ENCODE measurements at regions of chr18 and their contacts with region 1.

Region 1: DNA sequence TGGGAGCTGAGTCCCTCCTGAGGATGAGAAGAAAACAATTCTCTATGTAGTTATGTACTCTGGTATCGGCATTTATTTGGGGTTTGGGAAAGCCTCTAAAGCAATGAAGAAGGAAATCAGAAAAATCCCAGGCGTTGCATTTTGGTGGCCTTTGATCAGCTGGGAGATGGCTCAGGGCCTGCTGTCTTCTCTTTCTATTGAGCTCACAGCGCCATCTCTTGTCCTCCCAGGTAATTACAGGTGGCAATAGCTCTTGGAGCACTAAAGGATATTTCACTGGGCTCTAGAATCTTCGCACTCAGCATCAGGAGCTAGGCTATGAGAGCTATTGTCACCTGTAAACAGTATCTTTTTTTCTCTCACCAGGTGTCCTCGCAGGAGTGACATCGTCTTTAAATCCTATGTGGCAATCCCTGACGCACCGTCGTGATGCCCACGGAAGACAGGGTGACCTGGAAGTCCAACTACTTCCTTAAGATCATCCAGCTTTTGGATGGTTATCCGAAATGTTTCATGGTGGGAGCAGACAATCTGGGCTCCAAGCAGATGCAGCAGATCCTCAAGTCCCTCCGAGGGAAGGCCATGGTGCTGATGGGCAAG is 76.1 kb upstream of the PMAIP1 start:
- DNase-seq: peak; percentile 64
- H3K4me3 ChIP-seq: no peak overlapping the region; a peak in 1 of 4 replicates
- H3K27ac ChIP-seq: peak overlapping the region in 1 of 2 experiments; percentile 54; a peak in 2 of 4 replicates
- H3K4me1 ChIP-seq: peaks cover 0 to 12% of the 10 kb centered on the region in 2 experiments; a peak in 1 of 4 replicates
- H3K27me3 ChIP-seq: no peaks in the 10 kb centered on the region
- CTCF ChIP-seq: peak; percentile 94
- EP300 ChIP-seq: no peak
- RAD21 ChIP-seq: peak; percentile 99

Region 2: GRCh38 chr18:59470561-59471121 is 353.1 kb before region 1 on chr18:
- CTCF ChIA-PET with region 1: interaction called, 26 read pairs
- POLR2A ChIA-PET with region 1: no interaction called
- DNase-seq: no peak
- H3K4me3 ChIP-seq: no peak overlapping the region
- H3K27ac ChIP-seq: peak overlapping the region in 1 of 2 experiments; percentile 9; a peak in 1 of 4 replicates
- H3K4me1 ChIP-seq: peaks cover 0 to 12% of the 10 kb centered on the region in 2 experiments; a peak in 1 of 4 replicates
- H3K27me3 ChIP-seq: no peaks in the 10 kb centered on the region
- CTCF ChIP-seq: no peak
- EP300 ChIP-seq: peak in 1 of 2 experiments; percentile 20; a peak in 1 of 4 replicates
- RAD21 ChIP-seq: no peak

Region 3: DNA sequence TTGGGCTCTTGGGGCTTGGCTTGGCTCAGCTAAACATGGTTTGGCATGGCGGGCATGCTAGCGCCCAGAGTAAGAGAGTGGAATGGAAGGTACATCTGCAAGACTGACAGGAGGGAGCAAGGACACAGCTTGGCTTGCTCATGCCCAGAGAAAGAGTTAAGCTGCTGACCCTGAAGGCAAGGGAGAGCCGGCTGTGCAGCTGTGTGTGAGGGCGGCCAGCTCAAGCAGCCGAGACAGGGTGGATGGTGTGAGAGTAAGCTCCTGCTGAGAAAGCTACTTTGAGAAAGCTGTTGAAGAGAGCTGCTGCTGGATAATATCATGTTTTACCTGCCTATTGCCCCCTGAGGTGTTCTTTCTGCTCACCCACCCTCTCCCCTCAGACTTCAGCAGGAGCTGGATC is 262.1 kb before region 1 on chr18:
- CTCF ChIA-PET with region 1: interaction called, 10 read pairs
- POLR2A ChIA-PET with region 1: no interaction called
- DNase-seq: no peak
- H3K4me3 ChIP-seq: no peak overlapping the region
- H3K27ac ChIP-seq: no peak overlapping the region
- H3K4me1 ChIP-seq: peaks cover 0 to 19% of the 10 kb centered on the region in 2 experiments; a peak in 2 of 4 replicates
- H3K27me3 ChIP-seq: no peaks in the 10 kb centered on the region
- CTCF ChIP-seq: no peak
- EP300 ChIP-seq: no peak
- RAD21 ChIP-seq: no peak

Region 4: GRCh38 chr18:59623456-59624368 is 200.0 kb before region 1 on chr18:
- CTCF ChIA-PET with region 1: interaction called, 12 read pairs
- POLR2A ChIA-PET with region 1: no interaction called
- DNase-seq: no peak
- H3K4me3 ChIP-seq: no peak overlapping the region
- H3K27ac ChIP-seq: 0 out of 4 replicates have a peak overlapping the region, but pooled peaks of 1 of the 2 experiments have one; percentile 10
- H3K4me1 ChIP-seq: no peaks in the 10 kb centered on the region; a peak in 1 of 4 replicates
- H3K27me3 ChIP-seq: no peaks in the 10 kb centered on the region
- CTCF ChIP-seq: no peak
- EP300 ChIP-seq: 0 out of 4 replicates have a peak, but pooled peaks of 1 of the 2 experiments have one; percentile 4
- RAD21 ChIP-seq: no peak

Region 5: GRCh38 chr18:59783138-59783537 is 40.6 kb before region 1 on chr18:
- CTCF ChIA-PET with region 1: interaction called, 33 read pairs
- POLR2A ChIA-PET with region 1: no interaction called
- DNase-seq: peak; percentile 68
- H3K4me3 ChIP-seq: no peak overlapping the region
- H3K27ac ChIP-seq: peak overlapping the region in 1 of 2 experiments; percentile 46; a peak in 2 of 4 replicates
- H3K4me1 ChIP-seq: peaks cover 2 to 10% of the 10 kb centered on the region in 2 experiments; a peak in 3 of 4 replicates
- H3K27me3 ChIP-seq: no peaks in the 10 kb centered on the region
- CTCF ChIP-seq: peak; percentile 81
- EP300 ChIP-seq: no peak
- RAD21 ChIP-seq: peak; percentile 77

Region 6: DNA sequence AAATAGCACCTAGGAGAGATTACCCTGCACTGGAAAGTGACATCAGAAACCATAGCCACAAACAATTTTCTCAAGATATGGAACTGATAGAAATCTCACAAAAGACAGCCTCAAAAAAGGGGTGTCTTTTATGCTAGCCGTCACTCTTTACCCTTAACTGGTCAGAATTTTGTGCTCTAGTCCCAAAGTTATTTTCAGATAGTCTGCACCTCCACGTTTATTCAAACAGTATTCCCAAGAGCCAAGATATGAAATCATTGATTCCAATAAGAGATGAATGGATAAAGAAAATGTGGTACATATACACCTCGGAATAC is 52.6 kb after region 1 on chr18:
- CTCF ChIA-PET with region 1: no interaction called
- POLR2A ChIA-PET with region 1: no interaction called
- DNase-seq: no peak
- H3K4me3 ChIP-seq: no peak overlapping the region
- H3K27ac ChIP-seq: no peak overlapping the region
- H3K4me1 ChIP-seq: peaks cover 0 to 12% of the 10 kb centered on the region in 2 experiments; a peak in 3 of 4 replicates
- H3K27me3 ChIP-seq: no peaks in the 10 kb centered on the region
- CTCF ChIP-seq: no peak
- EP300 ChIP-seq: no peak
- RAD21 ChIP-seq: no peak